ENCODE measurements at regions of chr20 and their contacts with region 1.

Region 1: GRCh38 chr20:56554869-56555268 is 21.8 kb downstream of the FAM209B start:
- DNase-seq: peak; percentile 29
- ATAC-seq: peak; percentile 96
- H3K4me3 Mint-ChIP-seq: no peak overlapping the region
- H3K27ac Mint-ChIP-seq: no peak overlapping the region
- H3K4me1 Mint-ChIP-seq: peaks cover 8% of the 10 kb centered on the region
- H3K27me3 Mint-ChIP-seq: no peaks in the 10 kb centered on the region

Region 2: DNA sequence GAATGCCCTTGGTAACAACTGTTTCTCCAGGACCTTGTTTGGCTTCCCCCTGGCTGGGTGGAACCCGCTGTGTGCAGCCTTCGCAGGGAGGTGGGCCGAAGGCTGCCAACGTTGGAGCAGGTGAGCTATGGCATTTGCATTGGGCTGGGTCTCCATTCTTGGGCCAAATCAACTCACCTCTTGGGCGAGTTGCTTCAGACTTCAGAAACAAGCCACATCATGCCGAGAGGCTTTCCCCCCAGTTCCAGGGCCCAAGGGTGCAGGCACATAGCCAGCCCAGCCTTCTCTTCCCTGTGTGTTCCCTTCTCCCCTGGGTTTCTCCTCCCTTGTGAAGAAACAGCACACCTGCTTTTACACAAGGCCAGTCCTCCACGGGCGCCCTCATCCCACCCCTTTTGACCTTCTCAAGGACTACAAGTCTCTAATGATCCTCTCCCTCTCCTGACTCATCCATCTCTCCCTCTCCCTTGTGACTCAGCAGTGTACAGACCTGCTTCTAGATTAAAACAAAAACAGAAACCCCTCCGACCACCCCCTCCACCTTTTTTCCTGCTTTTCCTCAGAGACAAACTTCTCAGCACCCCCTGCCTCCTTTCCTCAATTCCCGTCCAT is 19.8 kb after region 1 on chr20:
- CTCF ChIA-PET with region 1: interaction called, 11 read pairs
- POLR2A ChIA-PET with region 1: no interaction called
- intact Hi-C with region 1: loop called in 1 of 2 experiments (anchors 2 kb)
- DNase-seq: no peak
- ATAC-seq: no peak
- H3K4me3 Mint-ChIP-seq: no peak overlapping the region
- H3K27ac Mint-ChIP-seq: no peak overlapping the region
- H3K4me1 Mint-ChIP-seq: no peaks in the 10 kb centered on the region
- H3K27me3 Mint-ChIP-seq: peaks cover 16% of the 10 kb centered on the region

Region 3: DNA sequence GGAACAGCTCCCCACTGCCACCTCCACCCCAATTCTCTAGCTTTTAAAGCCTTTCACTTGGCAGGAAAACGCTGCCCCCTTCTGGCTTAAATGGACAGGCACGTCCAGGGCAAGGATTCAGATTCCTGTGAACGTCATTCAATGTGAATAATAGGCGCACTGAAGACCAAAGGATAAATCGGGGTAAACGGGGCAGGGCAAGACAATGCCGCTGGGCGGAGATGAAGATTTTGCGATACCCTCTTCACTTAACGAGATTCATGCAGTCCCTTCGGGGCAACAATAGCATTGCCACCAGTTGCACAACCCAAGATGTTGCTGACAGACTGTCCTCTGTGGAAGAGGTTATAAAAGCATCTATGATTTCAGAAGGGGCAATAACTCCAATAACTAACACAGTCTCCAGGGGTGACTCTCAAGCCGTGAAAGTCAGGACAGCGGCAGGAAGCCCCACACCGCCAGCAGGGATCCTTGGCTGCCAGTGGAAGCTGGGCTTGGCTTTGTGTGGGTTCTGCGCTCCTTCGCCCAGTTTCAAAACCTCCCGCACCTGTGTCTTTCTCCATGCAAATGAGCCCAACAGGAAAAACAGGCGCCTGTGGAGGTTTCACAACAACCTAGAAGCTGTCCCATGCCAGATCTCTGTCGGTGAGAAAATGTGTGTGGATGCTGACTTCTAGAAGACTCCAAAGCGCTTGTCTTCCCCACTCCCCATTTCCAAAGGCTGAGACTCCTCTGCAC is 419.8 kb after region 1 on chr20:
- CTCF ChIA-PET with region 1: interaction called, 3 read pairs
- POLR2A ChIA-PET with region 1: interaction called, 3 read pairs
- intact Hi-C with region 1: loop called in 1 of 2 experiments (anchors 1 kb)
- DNase-seq: peak; percentile 56
- ATAC-seq: no peak
- H3K4me3 Mint-ChIP-seq: no peak overlapping the region
- H3K27ac Mint-ChIP-seq: no peak overlapping the region
- H3K4me1 Mint-ChIP-seq: no peaks in the 10 kb centered on the region
- H3K27me3 Mint-ChIP-seq: peaks cover 36% of the 10 kb centered on the region

Region 4: GRCh38 chr20:56995576-56996075 is 440.8 kb after region 1 on chr20:
- CTCF ChIA-PET with region 1: interaction called, 3 read pairs
- POLR2A ChIA-PET with region 1: no interaction called
- intact Hi-C with region 1: loop called (anchors 1 to 5 kb)
- DNase-seq: peak; percentile 57
- ATAC-seq: no peak
- H3K4me3 Mint-ChIP-seq: no peak overlapping the region
- H3K27ac Mint-ChIP-seq: no peak overlapping the region
- H3K4me1 Mint-ChIP-seq: no peaks in the 10 kb centered on the region
- H3K27me3 Mint-ChIP-seq: peaks cover 4% of the 10 kb centered on the region

Region 5: GRCh38 chr20:57048027-57048869 is 493.4 kb after region 1 on chr20:
- CTCF ChIA-PET with region 1: no interaction called
- POLR2A ChIA-PET with region 1: no interaction called
- intact Hi-C with region 1: loop called (anchors 2 to 10 kb)
- DNase-seq: peak; percentile 56
- ATAC-seq: peak; percentile 57
- H3K4me3 Mint-ChIP-seq: no peak overlapping the region
- H3K27ac Mint-ChIP-seq: no peak overlapping the region
- H3K4me1 Mint-ChIP-seq: no peaks in the 10 kb centered on the region
- H3K27me3 Mint-ChIP-seq: peaks cover 3% of the 10 kb centered on the region

Region 6: GRCh38 chr20:57351042-57351783 is 796.3 kb after region 1 on chr20 and contains the start of gene RAE1:
- CTCF ChIA-PET with region 1: interaction called, 8 read pairs
- POLR2A ChIA-PET with region 1: no interaction called
- intact Hi-C with region 1: loop called (anchors 2 to 5 kb)
- DNase-seq: peak; percentile 94
- ATAC-seq: peak; percentile 84
- H3K4me3 Mint-ChIP-seq: peak within 1 kb of the TSS; percentile 96
- H3K27ac Mint-ChIP-seq: peak within 1 kb of the TSS; percentile 89
- H3K4me1 Mint-ChIP-seq: peaks cover 37% of the 10 kb centered on the region
- H3K27me3 Mint-ChIP-seq: no peaks in the 10 kb centered on the region
- total RNA-seq, gene RAE1: 42.7 to 48.9 TPM

Measured in activated CD4-positive, alpha-beta T cell treated with anti-CD3 and anti-CD28 coated beads for 36 hours (primary cell).